ENCODE measurements at regions of chr19 and their contacts with region 1.

Region 1: GRCh38 chr19:10565567-10566407 is at the start of gene KRI1:
- DNase-seq: peak; percentile 99
- ATAC-seq: peak; percentile 87
- total RNA-seq, gene KRI1: 10.8 TPM

Region 2: GRCh38 chr19:10478903-10479384 is 86.8 kb before region 1 on chr19:
- intact Hi-C with region 1: loop called (anchors 5 kb)
- DNase-seq: peak; percentile 94
- ATAC-seq: peak; percentile 97

Region 3: DNA sequence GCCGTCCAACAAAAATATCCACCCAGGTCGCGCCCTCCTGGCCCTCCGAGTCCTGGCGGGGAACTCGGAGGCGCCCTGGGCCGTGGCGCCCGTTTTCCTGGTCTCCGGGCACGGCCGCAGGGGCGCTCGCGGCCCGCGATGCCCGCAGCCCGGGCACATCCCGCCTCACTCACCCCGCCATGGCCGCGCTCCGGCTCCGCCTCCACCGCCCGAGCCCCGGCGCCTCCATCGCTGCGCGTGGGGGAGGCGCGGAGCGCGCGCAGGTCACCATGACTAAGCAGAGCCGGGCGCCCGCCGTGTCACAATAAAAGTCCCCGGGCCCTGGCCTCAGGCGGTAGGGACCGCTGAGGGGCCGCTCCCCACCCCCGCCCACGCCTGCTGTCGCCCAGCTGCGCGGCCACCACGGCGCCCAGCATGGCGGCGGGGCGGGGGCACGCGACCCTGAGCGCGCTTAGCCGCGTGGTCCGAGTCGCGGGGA is 63.2 kb before region 1 on chr19:
- intact Hi-C with region 1: loop called (anchors 5 kb)
- DNase-seq: peak; percentile 96
- ATAC-seq: peak; percentile 96

Region 4: GRCh38 chr19:10543420-10544241 is 22.2 kb before region 1 on chr19 and contains the start of gene ATG4D:
- intact Hi-C with region 1: loop called (anchors 2 kb)
- DNase-seq: peak; percentile 90
- ATAC-seq: peak; percentile 93
- total RNA-seq, gene ATG4D: 47.6 TPM

Region 5: DNA sequence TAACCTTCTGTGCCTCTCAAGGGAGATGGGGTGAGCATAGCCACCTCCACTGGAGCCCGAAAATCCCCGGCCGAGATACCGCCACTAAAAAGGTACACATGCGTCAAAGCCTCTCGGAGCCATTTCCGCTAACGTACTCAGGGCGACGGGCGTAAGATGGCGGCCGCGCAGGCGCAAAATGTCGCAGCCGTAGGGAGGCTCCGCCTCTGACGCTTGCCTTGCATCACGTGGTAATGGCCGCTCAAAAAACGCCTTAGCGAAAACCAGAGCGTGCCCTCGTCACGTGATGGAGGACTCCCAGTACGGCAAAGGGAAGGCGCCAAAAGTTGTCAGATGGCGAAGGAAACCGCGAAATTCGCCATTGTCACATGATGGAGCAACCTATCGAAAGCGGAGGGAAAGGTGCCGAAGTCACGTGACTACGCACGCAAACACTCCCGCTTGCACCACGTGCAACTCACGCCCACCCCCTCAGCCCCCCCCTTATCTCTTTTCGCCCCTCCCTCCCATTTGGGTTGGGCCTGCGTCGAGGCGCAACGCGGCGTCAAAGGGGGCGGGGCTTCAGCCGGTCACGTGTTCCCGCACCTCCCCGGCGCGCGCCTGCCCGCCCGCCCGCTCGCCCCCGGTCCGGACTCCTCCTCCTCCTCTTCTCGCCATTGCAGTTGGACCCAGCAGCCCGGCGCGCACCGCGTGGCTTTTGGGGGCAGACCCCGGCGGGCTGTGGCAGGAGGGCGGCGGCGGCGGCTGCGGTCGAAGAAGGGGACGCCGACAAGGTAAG is 88.1 kb after region 1 on chr19 and contains the start of gene ILF3:
- intact Hi-C with region 1: loop called (anchors 5 kb)
- DNase-seq: peak; percentile 100
- ATAC-seq: peak; percentile 94
- total RNA-seq, gene ILF3: 101 TPM

Measured in Right ventricle myocardium inferior (tissue), 1 donor.